K562 (cell line): ENCODE measurements at regions of chr9 and their contacts with region 1.

Region 1: GRCh38 chr9:37441776-37442370 is 19.4 kb downstream of the GRHPR start:
- DNase-seq: peak in 1 of 4 experiments; percentile 11
- ATAC-seq: no peak
- H3K4me3 ChIP-seq: no peak overlapping the region
- H3K27ac ChIP-seq: no peak overlapping the region
- H3K4me1 ChIP-seq: no peaks in the 10 kb centered on the region
- H3K27me3 ChIP-seq: no peaks in the 10 kb centered on the region
- CTCF ChIP-seq: no peak
- EP300 ChIP-seq: no peak
- POLR2A ChIP-seq: no peak
- RAD21 ChIP-seq: no peak

Region 2: GRCh38 chr9:37430841-37431597 is 10.9 kb before region 1 on chr9:
- CTCF ChIA-PET with region 1: no interaction called
- POLR2A ChIA-PET with region 1: interaction called, 10 read pairs
- in situ Hi-C with region 1: no loop called
- intact Hi-C with region 1: no loop called
- DNase-seq: peak in 3 of 4 experiments; percentile 34 to 51 (median 43)
- ATAC-seq: peak; percentile 81
- H3K4me3 ChIP-seq: no peak overlapping the region
- H3K27ac ChIP-seq: no peak overlapping the region
- H3K4me1 ChIP-seq: peaks cover 0 to 4% of the 10 kb centered on the region in 2 experiments; a peak in 2 of 5 replicates
- H3K27me3 ChIP-seq: no peaks in the 10 kb centered on the region
- CTCF ChIP-seq: peak in 2 of 3 experiments; percentile 44 to 46; a peak in 5 of 6 replicates
- EP300 ChIP-seq: no peak
- POLR2A ChIP-seq: 0 out of 2 replicates have a peak, but pooled peaks have one; percentile 38
- RAD21 ChIP-seq: peak in 1 of 2 experiments; percentile 35; a peak in 1 of 4 replicates